Pancreas (tissue), 10 donors: ENCODE measurements at regions of chr12 and their contacts with region 1.

Region 1: GRCh38 chr12:120265473-120266179 is at the start of gene PXN:
- DNase-seq: peak; percentile 82 to 99 (median 93)
- ATAC-seq: peak; percentile 87 to 94 (median 91)
- H3K4me3 ChIP-seq: peak within 1 kb of the TSS; percentile 78 to 91 (median 90)
- H3K27ac ChIP-seq: peak within 1 kb of the TSS; percentile 42 to 77 (median 64)
- H3K4me1 ChIP-seq: peaks cover 0 to 27% (median 14%) of the 10 kb centered on the region in 3 donors
- H3K27me3 ChIP-seq: no peaks in the 10 kb centered on the region
- CTCF ChIP-seq: peak; percentile 73 to 88 (median 82)
- total RNA-seq, gene PXN: 20.9 to 37.5 (median 26.2) TPM

Region 2: DNA sequence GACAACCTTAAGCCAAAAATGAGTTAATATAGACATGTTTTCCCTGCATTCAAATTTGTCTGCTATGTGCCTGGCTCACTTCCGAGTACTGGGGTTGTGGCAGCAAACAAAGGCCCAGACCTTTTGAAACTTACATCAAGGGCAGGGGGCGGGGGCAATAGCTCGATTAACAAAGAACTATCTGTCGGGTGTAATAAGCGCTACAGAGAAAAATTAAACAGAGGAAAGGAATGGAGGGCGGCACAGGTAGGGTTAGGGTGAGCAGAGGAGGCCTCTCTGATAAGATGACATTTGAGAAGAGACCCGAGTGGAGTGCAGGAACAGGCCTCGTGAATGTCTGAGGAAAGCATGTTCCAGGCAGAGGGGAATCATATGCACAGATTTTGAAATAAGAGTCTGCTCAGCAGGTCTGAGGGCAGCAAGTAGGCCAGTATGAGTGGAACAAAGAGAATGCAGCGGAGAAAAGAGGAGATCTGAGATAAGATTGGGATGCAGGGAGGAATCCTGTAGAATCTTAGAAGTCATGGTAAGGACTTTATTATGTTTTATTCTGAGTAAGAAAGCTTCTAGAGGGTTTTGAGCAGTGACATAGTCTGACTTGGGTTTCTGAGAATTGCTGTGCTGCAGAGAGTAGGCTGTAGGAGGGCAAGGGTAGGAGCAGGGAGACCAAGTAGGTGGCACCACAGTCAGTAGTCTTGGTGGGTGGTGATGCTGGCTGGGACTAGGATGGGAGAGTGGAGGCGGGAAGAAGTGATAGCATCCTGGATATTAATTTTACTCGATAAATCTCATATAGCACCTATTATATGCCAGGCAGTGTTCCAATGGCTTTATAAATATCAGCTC is 224.0 kb before region 1 on chr12:
- intact Hi-C with region 1: no loop called
- DNase-seq: peak in 2 of 6 donors; percentile 5 to 18
- ATAC-seq: peak in 3 of 4 donors; percentile 29 to 57 (median 46)
- H3K4me3 ChIP-seq: no peak overlapping the region
- H3K27ac ChIP-seq: peak overlapping the region in 2 of 4 donors; percentile 36 to 55
- H3K4me1 ChIP-seq: peaks cover 0 to 3% (median 0%) of the 10 kb centered on the region in 3 donors
- H3K27me3 ChIP-seq: no peaks in the 10 kb centered on the region
- CTCF ChIP-seq: no peak

Region 3: GRCh38 chr12:120216742-120217605 is 48.7 kb before region 1 on chr12:
- intact Hi-C with region 1: loop called in 1 of 3 experiments (anchors 10 kb)
- DNase-seq: peak in 1 of 6 donors; percentile 77
- ATAC-seq: no peak
- H3K4me3 ChIP-seq: no peak overlapping the region
- H3K27ac ChIP-seq: no peak overlapping the region
- H3K4me1 ChIP-seq: no peaks in the 10 kb centered on the region
- H3K27me3 ChIP-seq: no peaks in the 10 kb centered on the region
- CTCF ChIP-seq: no peak

Region 4: DNA sequence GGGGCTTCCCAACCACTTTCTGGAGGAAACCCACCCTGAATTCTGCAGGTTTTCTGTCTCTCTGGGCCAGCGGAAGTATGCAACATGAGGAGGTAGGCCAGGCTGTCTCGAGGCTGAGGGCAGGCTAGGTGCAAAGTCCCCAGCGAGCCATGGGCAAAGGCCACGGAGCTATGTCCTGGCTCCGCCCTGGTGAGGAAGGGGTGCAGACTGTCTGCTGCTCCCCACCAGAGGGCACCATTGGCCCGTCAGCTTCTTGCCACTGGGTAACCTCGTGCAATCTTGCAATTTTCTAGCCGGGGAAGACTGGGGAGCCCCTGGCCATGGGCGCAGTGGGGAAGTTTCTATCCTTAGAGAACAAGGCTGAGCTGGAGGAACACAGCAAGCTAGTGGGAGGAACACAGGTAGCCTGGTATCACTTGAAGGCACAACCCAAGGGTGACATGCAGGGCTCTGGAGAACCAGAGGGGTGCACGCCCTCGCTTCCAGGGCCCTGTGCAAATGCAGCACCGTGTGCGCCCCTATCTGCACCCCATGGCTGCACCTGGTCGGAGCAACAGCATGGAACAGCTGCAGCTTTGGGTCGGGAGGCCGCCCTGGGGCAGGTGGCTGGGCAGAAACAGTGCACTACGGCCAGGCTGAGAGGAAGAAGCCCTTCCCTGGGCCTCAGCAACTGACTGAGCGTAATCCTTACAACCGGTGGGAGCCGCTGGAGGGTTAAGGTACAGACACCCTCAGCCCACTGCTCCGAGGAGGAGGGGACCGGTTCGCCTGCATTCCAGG is 37.1 kb before region 1 on chr12:
- intact Hi-C with region 1: loop called in 2 of 3 experiments (anchors 5 kb)
- DNase-seq: peak; percentile 84 to 95 (median 90)
- ATAC-seq: peak; percentile 72 to 78 (median 74)
- H3K4me3 ChIP-seq: peak overlapping the region in 1 of 4 donors; percentile 17
- H3K27ac ChIP-seq: peak overlapping the region in 3 of 4 donors; percentile 29 to 90 (median 77)
- H3K4me1 ChIP-seq: peaks cover 51 to 76% (median 52%) of the 10 kb centered on the region in 3 donors
- H3K27me3 ChIP-seq: no peaks in the 10 kb centered on the region
- CTCF ChIP-seq: peak; percentile 83 to 89 (median 88)

Region 5: DNA sequence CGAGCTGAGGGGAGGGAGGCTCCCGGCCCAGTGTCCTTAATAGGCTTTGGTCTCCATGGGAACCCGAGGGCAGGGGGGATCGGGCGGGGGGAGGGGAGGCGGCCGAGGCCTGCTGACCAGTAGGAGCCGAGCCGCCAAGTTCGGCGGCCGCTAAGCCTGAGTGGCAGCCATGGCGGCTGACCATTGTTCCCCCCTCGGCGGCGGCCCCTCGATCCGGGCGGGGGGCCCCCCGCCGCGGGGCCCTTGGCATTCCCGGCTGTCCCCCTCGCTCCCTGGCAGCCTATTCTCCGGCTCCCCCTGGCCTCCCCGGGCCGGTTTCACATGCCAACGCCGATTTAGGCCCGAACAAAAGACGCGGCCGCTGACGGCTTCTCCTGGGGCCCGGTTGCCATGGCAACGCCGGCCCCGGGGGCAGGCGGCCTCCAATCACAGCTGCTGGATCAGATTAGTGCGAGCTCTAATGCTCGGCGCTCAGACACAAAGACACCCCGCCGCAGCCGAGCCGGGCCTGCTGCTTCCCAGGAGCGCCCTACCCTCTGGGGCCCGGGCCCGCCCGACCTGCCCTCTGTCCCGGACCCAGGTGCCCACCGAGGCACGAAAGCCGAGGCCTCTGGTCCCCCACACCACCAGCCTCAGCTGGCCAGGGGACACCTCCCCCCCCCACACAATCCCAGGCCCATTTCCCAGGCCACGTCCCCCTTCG is 96.0 kb after region 1 on chr12:
- intact Hi-C with region 1: no loop called
- DNase-seq: peak in 5 of 6 donors; percentile 40 to 81 (median 65)
- ATAC-seq: peak; percentile 8 to 55 (median 32)
- H3K4me3 ChIP-seq: peak overlapping the region in 2 of 4 donors; percentile 21 to 32
- H3K27ac ChIP-seq: peak overlapping the region in 1 of 4 donors; percentile 23
- H3K4me1 ChIP-seq: peaks cover 7 to 12% (median 11%) of the 10 kb centered on the region in 3 donors
- H3K27me3 ChIP-seq: no peaks in the 10 kb centered on the region
- CTCF ChIP-seq: no peak